HEK293T (cell line): ENCODE measurements at regions of chr5 and their contacts with region 1.

Region 1: DNA sequence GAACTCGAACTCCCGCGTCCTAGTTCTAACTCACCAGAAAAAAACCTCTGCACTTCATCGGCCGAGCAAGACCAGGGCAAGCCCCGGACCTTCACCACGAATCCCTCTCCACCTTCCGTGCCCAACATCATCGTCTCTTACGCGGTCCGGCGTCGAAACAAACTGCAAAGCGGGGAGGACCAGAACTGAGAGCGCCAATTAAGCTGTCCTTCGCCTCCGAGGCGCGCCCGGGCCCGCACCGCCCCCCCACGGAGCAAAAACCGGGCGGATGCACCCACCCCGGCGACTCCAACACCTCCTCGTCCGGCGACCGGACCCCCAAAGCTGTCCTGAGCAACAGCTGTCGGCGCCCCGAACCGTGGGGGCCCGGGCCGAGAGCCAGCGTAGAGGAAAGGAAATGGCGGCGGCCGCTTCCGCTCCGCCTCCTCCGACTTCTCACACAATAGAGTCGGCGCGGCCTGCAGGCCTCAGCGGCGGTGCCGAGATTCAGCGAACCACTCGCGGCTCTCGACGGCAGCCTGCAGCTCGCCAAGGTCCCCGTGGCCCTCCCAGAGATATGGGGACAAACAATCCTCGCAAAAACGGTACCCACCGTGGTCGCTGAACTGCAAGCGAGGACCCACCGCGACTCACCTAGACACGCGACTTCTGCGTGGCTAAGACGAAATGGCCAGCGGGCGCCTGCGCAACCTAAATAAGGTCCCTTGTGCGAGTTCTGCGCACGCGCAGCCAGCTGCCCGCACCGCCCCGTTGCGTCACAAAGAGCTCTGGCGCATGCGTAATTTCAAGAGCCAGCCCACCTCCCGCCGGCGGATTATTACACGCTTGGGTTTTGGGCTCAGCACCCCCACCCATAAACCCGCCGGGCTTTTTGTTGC is at the start of gene HNRNPH1:
- DNase-seq: peak; percentile 99

Region 2: GRCh38 chr5:179550511-179551230 is 72.6 kb before region 1 on chr5 and contains the start of gene RUFY1:
- CTCF ChIA-PET with region 1: no interaction called
- POLR2A ChIA-PET with region 1: interaction called, 16 read pairs
- DNase-seq: peak; percentile 85

Region 3: DNA sequence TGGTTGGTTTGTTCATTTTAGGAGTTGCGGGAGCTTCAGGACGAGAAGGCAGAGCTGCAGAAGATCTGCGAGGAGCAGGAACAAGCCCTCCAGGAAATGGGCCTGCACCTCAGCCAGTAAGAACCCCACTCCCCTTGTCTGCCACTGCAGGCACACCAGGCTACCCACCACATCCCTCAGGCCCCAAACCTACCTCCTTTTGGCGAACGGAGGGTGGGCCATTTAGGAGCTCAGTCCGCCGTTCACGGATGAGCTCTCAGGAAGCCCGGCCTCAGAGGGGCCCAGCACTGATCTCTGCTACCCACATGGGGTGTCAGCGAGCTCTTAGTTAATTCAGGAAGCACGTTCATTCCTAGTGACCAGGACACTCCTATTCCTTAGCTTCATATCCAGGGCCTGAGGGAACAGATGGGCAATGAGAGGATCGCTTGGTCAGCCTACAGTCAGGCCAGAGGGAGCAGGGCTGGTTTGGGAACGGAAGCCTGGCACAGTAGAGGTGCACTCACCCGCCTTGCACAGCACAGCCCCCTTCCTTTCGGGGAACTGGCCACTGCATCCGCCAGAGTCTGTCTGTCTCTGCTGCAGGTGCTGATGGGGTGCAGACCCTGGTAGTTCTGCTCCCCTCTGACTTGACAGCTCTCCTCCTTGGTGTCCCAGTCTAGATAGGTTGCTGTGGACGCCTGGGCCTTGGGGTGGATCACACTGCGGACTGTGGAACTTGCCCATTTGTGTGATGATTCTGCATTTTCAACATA is 21.2 kb before region 1 on chr5:
- CTCF ChIA-PET with region 1: no interaction called
- POLR2A ChIA-PET with region 1: interaction called, 39 read pairs
- DNase-seq: no peak

Region 4: GRCh38 chr5:179643556-179643955 is 20.3 kb after region 1 on chr5:
- CTCF ChIA-PET with region 1: no interaction called
- POLR2A ChIA-PET with region 1: interaction called, 25 read pairs
- DNase-seq: no peak

Region 5: GRCh38 chr5:179678223-179679013 is 55.2 kb after region 1 on chr5:
- CTCF ChIA-PET with region 1: interaction called, 3 read pairs
- POLR2A ChIA-PET with region 1: interaction called, 15 read pairs
- DNase-seq: peak; percentile 99